Activated B cell treated with CpG ODN at 0.5 μM for 24 hours (primary cell): ENCODE measurements at regions of chr7 and their contacts with region 1.

Region 1: GRCh38 chr7:39465055-39465929 is 100.9 kb upstream of the YAE1 start:
- DNase-seq: no peak
- ATAC-seq: peak; percentile 50
- H3K4me3 Mint-ChIP-seq: no peak overlapping the region
- H3K27ac Mint-ChIP-seq: no peak overlapping the region
- H3K4me1 Mint-ChIP-seq: peaks cover 4% of the 10 kb centered on the region
- H3K27me3 Mint-ChIP-seq: peaks cover 8% of the 10 kb centered on the region
- CTCF ChIP-seq: peak; percentile 60

Region 2: DNA sequence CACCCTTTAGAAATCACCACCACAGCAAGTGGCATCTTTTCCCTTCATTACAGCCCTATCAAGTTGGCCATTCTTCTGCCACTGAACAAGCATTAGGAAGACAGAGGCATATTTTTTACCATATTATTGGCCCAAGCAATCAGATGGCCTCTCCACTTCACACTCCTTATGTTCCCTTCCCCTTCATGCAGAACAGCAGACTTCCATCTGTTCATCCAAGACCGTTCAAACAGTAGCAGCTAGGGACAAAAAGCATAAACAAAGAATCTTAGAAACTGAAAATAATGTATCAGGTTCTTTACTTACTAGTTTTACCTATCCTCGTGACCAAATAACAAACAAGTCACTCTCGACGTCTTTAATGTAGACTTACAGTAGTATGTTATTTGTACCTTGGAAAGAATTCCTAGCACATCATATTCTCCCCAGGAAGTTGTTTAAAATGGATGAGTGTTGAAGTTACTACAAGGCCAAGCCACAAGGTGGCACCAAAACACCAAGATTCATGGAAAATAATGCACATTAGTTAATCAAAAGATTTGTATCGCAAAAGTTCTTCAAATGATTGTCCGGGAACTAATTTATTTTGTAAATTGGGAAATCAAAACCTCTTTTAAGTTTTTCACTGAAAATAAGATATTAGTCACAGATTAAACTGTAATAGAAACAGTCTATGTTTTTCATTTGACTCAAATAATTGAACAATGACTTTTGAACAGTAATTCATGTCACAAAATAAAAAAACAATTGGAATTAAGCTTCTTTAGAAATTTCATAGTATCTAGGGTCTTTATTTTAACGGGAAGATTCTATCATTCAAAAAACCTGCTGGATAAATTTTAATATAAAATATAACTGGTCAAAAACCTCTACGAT is 668.4 kb before region 1 on chr7:
- CTCF ChIA-PET with region 1: interaction called, 6 read pairs
- POLR2A ChIA-PET with region 1: no interaction called
- intact Hi-C with region 1: loop called (anchors 1 kb)
- DNase-seq: no peak
- ATAC-seq: no peak
- H3K4me3 Mint-ChIP-seq: no peak overlapping the region
- H3K27ac Mint-ChIP-seq: no peak overlapping the region
- H3K4me1 Mint-ChIP-seq: no peaks in the 10 kb centered on the region
- H3K27me3 Mint-ChIP-seq: no peaks in the 10 kb centered on the region
- CTCF ChIP-seq: no peak

Region 3: DNA sequence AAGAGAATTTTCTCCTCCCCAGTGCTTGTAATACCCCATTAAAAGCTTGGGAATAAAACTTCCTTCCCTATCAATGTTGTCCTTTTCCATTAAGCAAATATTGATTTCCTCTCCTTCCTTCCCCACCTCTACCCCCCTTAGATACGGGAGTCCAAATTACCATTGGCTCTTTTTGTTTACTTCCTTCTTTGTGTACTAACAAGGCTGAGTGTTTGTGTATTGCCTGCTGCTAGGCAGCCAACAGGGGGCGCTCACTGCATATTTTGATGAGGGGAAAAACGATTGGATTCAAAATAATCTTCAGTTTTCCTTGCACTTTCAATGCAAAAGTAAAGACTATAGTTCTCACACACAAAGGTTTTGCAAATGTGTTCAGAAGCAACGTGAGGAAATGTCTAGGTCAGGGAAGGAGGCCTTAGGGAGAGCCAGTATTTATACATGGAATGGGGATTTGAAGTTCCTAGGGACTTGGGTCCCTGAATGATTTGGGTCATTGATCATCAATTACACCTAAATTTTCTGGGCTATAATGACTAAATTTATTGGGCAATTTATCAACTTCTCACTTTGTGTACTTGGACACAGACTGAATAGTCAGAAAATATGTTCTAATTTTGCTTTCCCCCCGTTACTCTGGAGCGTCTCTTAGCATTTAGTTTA is 532.7 kb before region 1 on chr7:
- CTCF ChIA-PET with region 1: no interaction called
- POLR2A ChIA-PET with region 1: no interaction called
- intact Hi-C with region 1: loop called (anchors 1 kb)
- DNase-seq: no peak
- ATAC-seq: no peak
- H3K4me3 Mint-ChIP-seq: no peak overlapping the region
- H3K27ac Mint-ChIP-seq: no peak overlapping the region
- H3K4me1 Mint-ChIP-seq: no peaks in the 10 kb centered on the region
- H3K27me3 Mint-ChIP-seq: peaks cover 3% of the 10 kb centered on the region
- CTCF ChIP-seq: peak; percentile 55

Region 4: GRCh38 chr7:39453743-39454355 is 11.4 kb before region 1 on chr7:
- CTCF ChIA-PET with region 1: interaction called, 20 read pairs
- POLR2A ChIA-PET with region 1: no interaction called
- intact Hi-C with region 1: no loop called
- DNase-seq: no peak
- ATAC-seq: peak; percentile 57
- H3K4me3 Mint-ChIP-seq: no peak overlapping the region
- H3K27ac Mint-ChIP-seq: no peak overlapping the region
- H3K4me1 Mint-ChIP-seq: no peaks in the 10 kb centered on the region
- H3K27me3 Mint-ChIP-seq: peaks cover 3% of the 10 kb centered on the region
- CTCF ChIP-seq: peak; percentile 39

Region 5: DNA sequence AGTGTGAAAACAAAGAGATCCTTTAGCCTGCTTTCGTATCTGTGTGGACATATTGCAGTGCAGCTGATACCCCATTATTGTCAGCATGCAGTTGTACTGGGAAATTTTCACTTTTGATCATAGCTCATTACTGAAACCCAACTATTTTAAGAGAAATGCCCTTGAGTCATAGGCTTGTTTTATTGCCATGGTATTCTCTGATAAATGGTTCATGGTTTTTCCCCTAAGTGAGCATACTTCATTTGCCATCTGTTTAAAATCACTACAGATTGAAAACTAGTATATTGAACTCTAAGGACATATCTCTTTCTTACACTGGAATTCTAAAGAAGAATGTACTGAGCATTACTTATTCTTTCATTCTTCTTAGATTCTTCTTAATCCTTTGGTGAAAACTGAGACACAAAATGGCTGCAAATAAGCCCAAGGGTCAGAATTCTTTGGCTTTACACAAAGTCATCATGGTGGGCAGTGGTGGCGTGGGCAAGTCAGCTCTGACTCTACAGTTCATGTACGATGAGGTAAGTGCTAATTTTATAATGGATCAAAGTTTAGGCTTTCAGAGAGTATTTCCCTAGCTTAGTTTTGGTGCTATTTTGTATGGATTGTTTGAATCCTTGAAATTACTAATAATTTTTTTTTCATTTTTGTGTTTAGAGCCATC is 221.1 kb after region 1 on chr7:
- CTCF ChIA-PET with region 1: no interaction called
- POLR2A ChIA-PET with region 1: no interaction called
- intact Hi-C with region 1: no loop called
- DNase-seq: no peak
- ATAC-seq: peak; percentile 40
- H3K4me3 Mint-ChIP-seq: no peak overlapping the region
- H3K27ac Mint-ChIP-seq: peak overlapping the region; percentile 7
- H3K4me1 Mint-ChIP-seq: peaks cover 23% of the 10 kb centered on the region
- H3K27me3 Mint-ChIP-seq: no peaks in the 10 kb centered on the region
- CTCF ChIP-seq: no peak